ENCODE measurements at regions of chr11 and their contacts with region 1.

Region 1: GRCh38 chr11:19453651-19454257 is 213.0 kb upstream of the E2F8 start:
- DNase-seq: no peak
- ATAC-seq: no peak

Region 2: GRCh38 chr11:19145319-19145718 is 308.4 kb before region 1 on chr11:
- intact Hi-C with region 1: no loop called
- DNase-seq: no peak
- ATAC-seq: no peak

Region 3: DNA sequence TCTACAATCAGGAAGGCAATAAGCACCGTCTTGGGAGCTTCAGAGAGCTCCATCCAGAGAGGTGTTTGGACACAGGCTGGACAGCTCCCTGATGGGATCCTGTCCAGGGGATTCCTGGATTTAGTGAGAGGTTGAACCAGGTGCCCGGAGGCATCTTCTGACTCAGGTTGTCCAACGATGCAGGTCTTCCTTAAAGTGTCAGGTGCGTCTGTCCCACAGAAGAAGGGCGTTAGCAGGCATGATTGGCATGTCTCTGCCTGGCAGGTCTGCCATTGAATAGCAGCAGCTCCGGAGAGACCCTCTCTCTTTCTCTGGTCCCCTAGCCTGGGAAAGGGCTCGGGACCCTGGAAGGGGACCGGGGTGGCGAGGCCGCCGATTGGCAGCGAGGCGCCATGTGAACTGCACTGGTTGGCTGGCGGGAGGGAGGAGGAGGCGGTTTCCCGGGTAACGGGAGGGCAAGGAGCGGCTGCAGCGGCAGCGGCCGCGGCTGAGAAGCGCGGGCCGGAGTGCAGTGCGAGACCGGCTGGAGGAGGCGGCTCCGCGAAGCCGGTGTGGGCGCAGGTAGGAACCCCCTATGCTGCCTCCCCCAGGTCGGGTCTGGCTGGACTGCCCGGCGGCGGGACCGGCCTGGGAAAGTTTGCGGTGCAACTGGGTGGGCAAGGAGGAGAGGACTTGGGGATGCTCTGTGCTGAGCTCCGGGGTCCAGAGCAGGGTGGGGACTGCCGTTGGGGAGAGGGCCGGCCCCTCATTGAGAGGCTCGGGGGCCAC is 108.8 kb before region 1 on chr11:
- intact Hi-C with region 1: loop called (anchors 10 kb)
- DNase-seq: peak; percentile 73
- ATAC-seq: peak; percentile 31

Measured in Right ventricle myocardium inferior (tissue), 1 donor.